CD4-positive, alpha-beta T cell (primary cell): ENCODE measurements at regions of chr1 and their contacts with region 1.

Region 1: GRCh38 chr1:24930204-24931145 is at the start of gene RUNX3:
- DNase-seq: peak; percentile 83 to 97 (median 92)
- ATAC-seq: peak; percentile 81
- H3K4me3 ChIP-seq: peak within 1 kb of the TSS; percentile 83
- H3K4me3 Mint-ChIP-seq: peak within 1 kb of the TSS; percentile 99
- H3K27ac ChIP-seq: peak within 1 kb of the TSS; percentile 91 to 95
- H3K27ac Mint-ChIP-seq: peak within 1 kb of the TSS; percentile 98
- H3K4me1 ChIP-seq: peaks cover 67% of the 10 kb centered on the region
- H3K4me1 Mint-ChIP-seq: peaks cover 61% of the 10 kb centered on the region
- H3K27me3 ChIP-seq: no peaks in the 10 kb centered on the region
- H3K27me3 Mint-ChIP-seq: no peaks in the 10 kb centered on the region
- CTCF ChIP-seq: peak; percentile 14
- total RNA-seq, gene RUNX3: 202 to 209 TPM

Region 2: GRCh38 chr1:24642481-24643361 is 287.8 kb before region 1 on chr1 and contains the start of gene SRRM1:
- CTCF ChIA-PET with region 1: no interaction called
- POLR2A ChIA-PET with region 1: interaction called, 4 read pairs
- intact Hi-C with region 1: loop called in 1 of 2 experiments (anchors 5 kb)
- DNase-seq: peak; percentile 96 to 100 (median 98)
- ATAC-seq: peak; percentile 87
- H3K4me3 ChIP-seq: peak within 1 kb of the TSS; percentile 89
- H3K4me3 Mint-ChIP-seq: peak within 1 kb of the TSS; percentile 90
- H3K27ac ChIP-seq: peak within 1 kb of the TSS; percentile 99
- H3K27ac Mint-ChIP-seq: peak within 1 kb of the TSS; percentile 96
- H3K4me1 ChIP-seq: peaks cover 26% of the 10 kb centered on the region
- H3K4me1 Mint-ChIP-seq: peaks cover 55% of the 10 kb centered on the region
- H3K27me3 ChIP-seq: no peaks in the 10 kb centered on the region
- H3K27me3 Mint-ChIP-seq: no peaks in the 10 kb centered on the region
- CTCF ChIP-seq: no peak
- total RNA-seq, gene SRRM1: 338 to 360 TPM

Region 3: GRCh38 chr1:24897767-24898483 is 32.5 kb before region 1 on chr1:
- CTCF ChIA-PET with region 1: interaction called, 6 read pairs
- POLR2A ChIA-PET with region 1: interaction called, 23 read pairs
- intact Hi-C with region 1: no loop called
- DNase-seq: peak in 11 of 14 experiments; percentile 26 to 68 (median 38)
- ATAC-seq: peak; percentile 64
- H3K4me3 ChIP-seq: no peak overlapping the region
- H3K4me3 Mint-ChIP-seq: peak overlapping the region; percentile 20
- H3K27ac ChIP-seq: no peak overlapping the region
- H3K27ac Mint-ChIP-seq: peak overlapping the region; percentile 76
- H3K4me1 ChIP-seq: peaks cover 43% of the 10 kb centered on the region
- H3K4me1 Mint-ChIP-seq: peaks cover 25% of the 10 kb centered on the region
- H3K27me3 ChIP-seq: no peaks in the 10 kb centered on the region
- H3K27me3 Mint-ChIP-seq: no peaks in the 10 kb centered on the region
- CTCF ChIP-seq: peak; percentile 71

Region 4: GRCh38 chr1:24919791-24920532 is 10.5 kb before region 1 on chr1:
- CTCF ChIA-PET with region 1: interaction called, 5 read pairs
- POLR2A ChIA-PET with region 1: interaction called, 121 read pairs
- intact Hi-C with region 1: loop called in 1 of 2 experiments (anchors 2 kb)
- DNase-seq: peak in 4 of 14 experiments; percentile 53 to 68 (median 54)
- ATAC-seq: no peak
- H3K4me3 ChIP-seq: peak overlapping the region; percentile 9
- H3K4me3 Mint-ChIP-seq: peak overlapping the region; percentile 68
- H3K27ac ChIP-seq: peak overlapping the region; percentile 7 to 57
- H3K27ac Mint-ChIP-seq: peak overlapping the region; percentile 98
- H3K4me1 ChIP-seq: peaks cover 97% of the 10 kb centered on the region
- H3K4me1 Mint-ChIP-seq: peaks cover 58% of the 10 kb centered on the region
- H3K27me3 ChIP-seq: no peaks in the 10 kb centered on the region
- H3K27me3 Mint-ChIP-seq: no peaks in the 10 kb centered on the region
- CTCF ChIP-seq: no peak

Region 5: GRCh38 chr1:25031966-25032667 is 101.6 kb after region 1 on chr1:
- CTCF ChIA-PET with region 1: interaction called, 52 read pairs
- POLR2A ChIA-PET with region 1: interaction called, 29 read pairs
- intact Hi-C with region 1: loop called (anchors 1 kb)
- DNase-seq: peak; percentile 43 to 94 (median 57)
- ATAC-seq: peak; percentile 76
- H3K4me3 ChIP-seq: no peak overlapping the region
- H3K4me3 Mint-ChIP-seq: peak overlapping the region; percentile 32
- H3K27ac ChIP-seq: peak overlapping the region; percentile 84
- H3K27ac Mint-ChIP-seq: peak overlapping the region; percentile 84
- H3K4me1 ChIP-seq: peaks cover 99% of the 10 kb centered on the region
- H3K4me1 Mint-ChIP-seq: peaks cover 71% of the 10 kb centered on the region
- H3K27me3 ChIP-seq: no peaks in the 10 kb centered on the region
- H3K27me3 Mint-ChIP-seq: no peaks in the 10 kb centered on the region
- CTCF ChIP-seq: no peak

Region 6: GRCh38 chr1:25148673-25149300 is 218.3 kb after region 1 on chr1:
- CTCF ChIA-PET with region 1: no interaction called
- POLR2A ChIA-PET with region 1: interaction called, 3 read pairs
- intact Hi-C with region 1: loop called in 1 of 2 experiments (anchors 5 kb)
- DNase-seq: peak in 8 of 14 experiments; percentile 4 to 66 (median 28)
- ATAC-seq: peak; percentile 41
- H3K4me3 ChIP-seq: no peak overlapping the region
- H3K4me3 Mint-ChIP-seq: no peak overlapping the region
- H3K27ac ChIP-seq: no peak overlapping the region
- H3K27ac Mint-ChIP-seq: no peak overlapping the region
- H3K4me1 ChIP-seq: no peaks in the 10 kb centered on the region
- H3K4me1 Mint-ChIP-seq: no peaks in the 10 kb centered on the region
- H3K27me3 ChIP-seq: peaks cover 2 to 8% of the 10 kb centered on the region in 2 experiments
- H3K27me3 Mint-ChIP-seq: peaks cover 49% of the 10 kb centered on the region
- CTCF ChIP-seq: peak; percentile 55